ENCODE measurements at regions of chr12 and their contacts with region 1.

Region 1: GRCh38 chr12:104485651-104486362 is 29.1 kb downstream of the CHST11 start:
- DNase-seq: peak; percentile 77
- H3K4me3 Mint-ChIP-seq: no peak overlapping the region
- H3K27ac Mint-ChIP-seq: peak overlapping the region; percentile 53
- H3K4me1 Mint-ChIP-seq: peaks cover 85% of the 10 kb centered on the region
- H3K27me3 Mint-ChIP-seq: no peaks in the 10 kb centered on the region

Region 2: DNA sequence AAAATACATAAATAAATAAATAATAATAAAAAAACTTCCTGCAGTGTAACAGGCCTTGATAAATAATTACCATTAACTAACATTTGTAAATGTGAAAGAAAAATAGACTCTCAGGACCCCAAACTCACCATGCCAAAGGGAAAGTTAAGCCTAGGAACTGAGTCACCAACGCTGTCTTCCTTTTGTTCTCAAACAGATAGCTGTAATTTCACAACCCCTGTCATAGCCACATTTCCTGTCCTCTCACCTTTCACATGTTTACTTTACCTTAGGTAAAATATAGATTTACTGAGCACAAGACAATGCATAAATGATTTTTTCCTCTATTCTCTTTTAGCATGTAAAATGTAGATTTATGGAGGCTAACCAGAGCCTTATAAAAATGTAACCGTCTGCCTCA is 64.9 kb before region 1 on chr12:
- CTCF ChIA-PET with region 1: no interaction called
- intact Hi-C with region 1: loop called (anchors 5 kb)
- DNase-seq: peak; percentile 42
- H3K4me3 Mint-ChIP-seq: no peak overlapping the region
- H3K27ac Mint-ChIP-seq: no peak overlapping the region
- H3K4me1 Mint-ChIP-seq: peaks cover 7% of the 10 kb centered on the region
- H3K27me3 Mint-ChIP-seq: no peaks in the 10 kb centered on the region

Region 3: DNA sequence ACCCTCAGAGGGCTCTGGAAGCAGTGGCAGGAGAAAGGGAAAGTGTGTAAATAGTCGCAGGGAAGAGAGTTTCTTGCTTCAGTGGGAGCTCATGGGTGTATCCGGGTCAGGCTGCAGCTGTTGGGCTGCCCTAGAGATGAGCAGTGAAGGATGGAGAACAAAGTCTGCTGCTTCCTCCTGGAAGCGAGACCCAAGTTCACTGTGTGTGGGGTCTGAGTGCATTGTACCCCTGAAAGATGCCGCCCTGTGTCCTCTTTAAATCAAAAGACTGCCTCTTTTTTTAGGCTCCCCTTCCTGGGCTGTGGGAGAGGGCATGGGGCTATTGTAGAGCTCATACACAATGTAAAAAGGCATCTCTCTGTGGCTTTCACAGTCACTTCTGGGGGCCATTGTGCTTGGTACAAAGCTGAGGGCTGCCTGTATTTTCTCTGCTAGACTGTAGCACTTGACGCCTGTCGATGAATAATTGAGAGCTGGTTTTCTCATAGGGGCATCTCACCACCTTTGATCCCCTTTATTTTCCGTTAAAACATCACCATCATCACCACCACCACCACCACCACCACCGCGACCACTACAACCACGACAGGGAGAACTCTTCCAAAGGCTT is 12.3 kb before region 1 on chr12:
- CTCF ChIA-PET with region 1: no interaction called
- intact Hi-C with region 1: loop called (anchors 2 kb)
- DNase-seq: no peak
- H3K4me3 Mint-ChIP-seq: peak overlapping the region; percentile 30
- H3K27ac Mint-ChIP-seq: no peak overlapping the region
- H3K4me1 Mint-ChIP-seq: peaks cover 55% of the 10 kb centered on the region
- H3K27me3 Mint-ChIP-seq: no peaks in the 10 kb centered on the region

Measured in activated naive CD4-positive, alpha-beta T cell treated with anti-CD3 and anti-CD28 coated beads for 36 hours (primary cell).